ENCODE measurements at regions of chr5 and their contacts with region 1.

Region 1: GRCh38 chr5:37722236-37723146 is 117.3 kb downstream of the GDNF start:
- DNase-seq: peak; percentile 68
- H3K4me3 Mint-ChIP-seq: no peak overlapping the region
- H3K27ac Mint-ChIP-seq: peak overlapping the region; percentile 50
- H3K4me1 Mint-ChIP-seq: peaks cover 26% of the 10 kb centered on the region
- H3K27me3 Mint-ChIP-seq: no peaks in the 10 kb centered on the region

Region 2: DNA sequence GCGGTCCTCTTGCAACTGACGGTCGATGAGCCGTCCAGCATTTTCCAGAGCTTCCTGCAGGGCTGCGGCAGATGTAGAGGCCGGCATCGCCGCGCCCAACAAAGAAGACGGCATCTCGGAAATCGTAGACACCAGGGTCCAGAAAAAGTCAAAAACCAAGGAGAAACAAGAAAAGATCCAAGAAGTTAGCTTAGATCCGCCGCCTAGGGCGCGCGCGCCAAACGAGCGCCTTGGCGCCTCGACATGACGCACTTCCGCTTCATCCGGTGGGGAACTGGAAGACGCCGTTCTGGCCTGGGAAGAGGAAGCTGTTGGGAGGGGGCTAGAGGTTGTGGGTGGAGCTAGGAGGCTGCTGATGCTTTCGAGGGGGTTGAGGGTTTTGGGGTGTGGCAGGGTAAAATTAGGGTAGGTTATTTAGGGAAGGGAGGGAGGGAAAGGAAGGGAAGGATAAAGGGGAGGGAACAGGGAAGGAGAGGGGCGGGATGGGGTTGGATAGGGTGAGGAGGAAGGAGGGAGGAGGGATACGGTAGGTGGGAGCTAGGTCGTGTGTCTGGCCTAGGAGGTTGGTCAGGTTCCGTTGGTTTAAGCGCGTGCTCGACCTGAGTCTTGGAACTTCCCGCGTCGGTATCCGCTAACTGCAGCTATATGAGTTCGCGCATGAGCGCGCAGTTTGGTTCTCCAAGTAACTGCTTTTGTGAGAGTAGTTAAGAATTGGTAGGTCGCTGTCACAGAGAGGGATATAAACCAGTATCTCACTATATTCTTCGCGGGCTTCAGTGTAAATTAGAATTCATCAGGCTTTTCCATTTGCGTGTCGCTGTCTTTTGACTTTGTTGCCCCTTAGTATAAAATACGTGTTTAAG is 351.4 kb before region 1 on chr5 and contains the start of gene NUP155:
- CTCF ChIA-PET with region 1: no interaction called
- intact Hi-C with region 1: loop called (anchors 1 kb)
- DNase-seq: peak; percentile 94
- H3K4me3 Mint-ChIP-seq: peak within 1 kb of the TSS; percentile 99
- H3K27ac Mint-ChIP-seq: peak within 1 kb of the TSS; percentile 96
- H3K4me1 Mint-ChIP-seq: peaks cover 37% of the 10 kb centered on the region
- H3K27me3 Mint-ChIP-seq: no peaks in the 10 kb centered on the region
- total RNA-seq, gene NUP155: 79.2 to 87.8 TPM

Region 3: GRCh38 chr5:37448941-37449340 is 273.6 kb before region 1 on chr5:
- CTCF ChIA-PET with region 1: no interaction called
- intact Hi-C with region 1: loop called (anchors 1 kb)
- DNase-seq: no peak
- H3K4me3 Mint-ChIP-seq: no peak overlapping the region
- H3K27ac Mint-ChIP-seq: no peak overlapping the region
- H3K4me1 Mint-ChIP-seq: peaks cover 5% of the 10 kb centered on the region
- H3K27me3 Mint-ChIP-seq: no peaks in the 10 kb centered on the region

Region 4: GRCh38 chr5:37738057-37738691 is 15.7 kb after region 1 on chr5:
- CTCF ChIA-PET with region 1: interaction called, 10 read pairs
- intact Hi-C with region 1: loop called (anchors 1 kb)
- DNase-seq: peak; percentile 17
- H3K4me3 Mint-ChIP-seq: no peak overlapping the region
- H3K27ac Mint-ChIP-seq: no peak overlapping the region
- H3K4me1 Mint-ChIP-seq: peaks cover 9% of the 10 kb centered on the region
- H3K27me3 Mint-ChIP-seq: no peaks in the 10 kb centered on the region

Region 5: GRCh38 chr5:37837414-37838032 is 115.0 kb after region 1 on chr5:
- CTCF ChIA-PET with region 1: no interaction called
- intact Hi-C with region 1: loop called (anchors 1 kb)
- DNase-seq: peak; percentile 85
- H3K4me3 Mint-ChIP-seq: peak overlapping the region; percentile 49
- H3K27ac Mint-ChIP-seq: no peak overlapping the region
- H3K4me1 Mint-ChIP-seq: peaks cover 33% of the 10 kb centered on the region
- H3K27me3 Mint-ChIP-seq: peaks cover 81% of the 10 kb centered on the region